ENCODE measurements at regions of chr3 and their contacts with region 1.

Region 1: DNA sequence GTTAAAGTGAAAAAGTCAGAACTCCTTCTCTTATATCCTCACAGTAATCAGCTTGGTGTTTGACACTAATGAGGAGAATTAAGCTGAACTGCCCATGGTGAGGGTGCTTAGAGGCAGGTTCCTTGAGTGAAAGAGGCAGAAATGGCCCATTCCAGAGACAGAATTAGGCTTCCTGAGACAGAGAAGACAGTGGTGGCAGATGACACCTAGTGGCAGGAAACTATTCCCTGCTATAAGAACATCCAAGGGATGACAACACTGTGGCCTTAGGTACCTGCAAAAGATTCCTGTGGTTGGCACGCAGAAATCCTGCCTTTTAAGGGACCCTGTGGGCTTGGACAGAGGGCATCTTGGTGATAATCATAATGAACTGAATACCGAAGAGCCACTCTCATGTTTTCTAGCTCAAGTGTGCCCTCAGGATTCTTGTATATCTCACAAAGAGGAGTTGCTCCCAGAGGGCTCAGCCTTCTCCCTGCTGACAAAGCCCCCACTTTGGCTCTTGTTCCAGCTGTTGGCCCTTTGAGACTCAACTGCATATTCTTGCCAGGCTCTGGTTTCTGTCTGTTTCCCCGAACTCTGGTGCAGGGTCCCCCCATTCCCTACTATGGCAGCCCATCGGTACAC is 56.0 kb downstream of the KBTBD12 start:
- DNase-seq: peak; percentile 60
- H3K4me3 ChIP-seq: no peak overlapping the region
- H3K27ac ChIP-seq: no peak overlapping the region
- H3K4me1 ChIP-seq: no peaks in the 10 kb centered on the region
- H3K27me3 ChIP-seq: peaks cover 78% of the 10 kb centered on the region
- CTCF ChIP-seq: peak; percentile 74

Region 2: DNA sequence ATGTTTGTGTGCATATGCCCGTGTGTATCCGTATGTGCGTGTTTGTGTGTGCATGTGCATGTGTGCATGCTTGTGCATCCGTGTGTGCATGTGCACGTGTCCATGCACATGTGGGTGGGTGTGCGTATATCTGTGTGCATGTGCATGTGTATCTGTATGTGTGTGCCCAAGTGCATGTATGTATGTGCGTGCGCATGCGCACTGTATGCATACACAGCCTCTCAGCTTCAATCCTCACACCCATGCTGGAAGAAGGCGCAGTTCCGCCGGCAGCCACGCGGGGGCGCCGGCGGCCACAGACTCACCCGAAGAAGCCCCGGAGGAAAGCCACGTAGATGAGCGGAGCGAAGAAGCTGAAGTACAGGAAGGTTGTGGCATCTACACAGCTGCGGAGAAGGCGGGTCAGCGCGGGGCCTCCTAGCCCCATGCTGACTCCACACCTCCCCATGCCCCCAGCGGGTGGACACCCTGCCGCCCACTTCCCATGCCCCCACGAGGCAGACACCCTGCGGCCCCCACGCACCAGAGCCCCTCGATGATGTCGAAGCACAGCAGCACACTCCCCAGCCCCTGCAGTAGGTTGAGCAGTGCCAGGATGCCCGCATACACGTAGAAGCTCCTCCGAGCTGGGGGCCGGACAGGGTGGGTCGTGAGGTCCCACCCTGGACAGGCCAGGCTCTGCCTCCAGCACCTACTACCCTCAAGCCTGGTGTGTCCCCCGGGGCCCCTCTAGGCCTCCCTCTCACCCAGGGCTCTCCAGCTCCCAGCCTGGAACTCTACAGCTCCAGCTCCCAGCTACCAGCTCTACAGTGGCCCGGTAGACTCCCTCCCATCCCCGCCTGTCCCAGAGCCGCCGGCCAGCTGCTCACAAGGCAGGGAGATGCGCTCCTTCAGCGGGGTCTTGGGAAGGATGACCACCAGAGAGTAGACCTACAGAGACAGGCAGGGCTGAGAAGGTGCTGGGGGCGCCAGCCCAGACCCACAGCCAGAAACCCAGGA is 395.9 kb before region 1 on chr3:
- CTCF ChIA-PET with region 1: interaction called, 4 read pairs
- POLR2A ChIA-PET with region 1: no interaction called
- intact Hi-C with region 1: loop called (anchors 10 kb)
- DNase-seq: peak; percentile 92
- H3K4me3 ChIP-seq: no peak overlapping the region
- H3K27ac ChIP-seq: no peak overlapping the region
- H3K4me1 ChIP-seq: no peaks in the 10 kb centered on the region
- H3K27me3 ChIP-seq: no peaks in the 10 kb centered on the region
- CTCF ChIP-seq: peak; percentile 99

Region 3: GRCh38 chr3:127652231-127652995 is 318.7 kb before region 1 on chr3:
- CTCF ChIA-PET with region 1: no interaction called
- POLR2A ChIA-PET with region 1: no interaction called
- intact Hi-C with region 1: loop called (anchors 1 kb)
- DNase-seq: peak; percentile 73
- H3K4me3 ChIP-seq: no peak overlapping the region
- H3K27ac ChIP-seq: no peak overlapping the region
- H3K4me1 ChIP-seq: no peaks in the 10 kb centered on the region
- H3K27me3 ChIP-seq: no peaks in the 10 kb centered on the region
- CTCF ChIP-seq: peak; percentile 89

Region 4: DNA sequence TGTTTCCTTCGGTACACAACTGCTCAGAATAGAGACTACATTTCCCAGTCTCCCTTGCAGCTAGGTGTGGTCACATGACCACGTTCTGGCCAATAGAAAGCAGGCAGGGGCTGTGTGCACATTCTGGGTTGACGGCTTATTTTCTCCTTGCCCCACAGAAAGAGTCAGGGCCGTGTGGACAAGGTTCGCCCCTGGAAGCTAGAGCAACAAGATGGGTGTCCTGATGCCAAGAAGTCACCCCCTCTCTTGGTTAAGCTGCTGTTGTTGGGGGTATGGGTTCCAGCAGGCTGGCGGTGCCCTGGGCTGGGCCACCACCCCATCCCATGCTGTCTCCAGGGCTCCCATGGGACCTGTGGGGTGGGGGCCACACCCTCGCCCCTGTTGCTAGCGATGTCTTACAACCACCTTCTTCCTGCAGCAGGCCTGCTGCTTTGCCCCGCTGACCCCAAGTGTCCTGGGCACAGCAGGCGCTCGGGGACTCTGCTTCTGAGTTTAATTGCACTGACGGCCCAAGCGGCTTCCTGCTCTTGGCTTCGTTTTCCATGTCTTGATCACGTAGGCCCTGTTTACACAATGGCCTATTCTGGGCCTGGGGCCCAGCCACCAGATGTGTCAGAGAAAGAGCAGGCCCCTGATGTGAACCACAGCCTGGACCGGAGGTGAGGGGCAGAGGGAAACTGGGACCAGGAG is 273.4 kb before region 1 on chr3:
- CTCF ChIA-PET with region 1: no interaction called
- POLR2A ChIA-PET with region 1: no interaction called
- intact Hi-C with region 1: loop called (anchors 5 kb)
- DNase-seq: peak; percentile 92
- H3K4me3 ChIP-seq: peak overlapping the region; percentile 14
- H3K27ac ChIP-seq: peak overlapping the region; percentile 74
- H3K4me1 ChIP-seq: peaks cover 18% of the 10 kb centered on the region
- H3K27me3 ChIP-seq: no peaks in the 10 kb centered on the region
- CTCF ChIP-seq: no peak